Colonic mucosa (tissue), 4 donors: ENCODE measurements at regions of chr3 and their contacts with region 1.

Region 1: GRCh38 chr3:39202094-39202493 is 9.7 kb upstream of the XIRP1 start:
- DNase-seq: peak; percentile 10
- H3K4me3 ChIP-seq: no peak overlapping the region
- H3K27ac ChIP-seq: no peak overlapping the region
- H3K4me1 ChIP-seq: no peaks in the 10 kb centered on the region
- H3K27me3 ChIP-seq: no peaks in the 10 kb centered on the region
- CTCF ChIP-seq: no peak

Region 2: DNA sequence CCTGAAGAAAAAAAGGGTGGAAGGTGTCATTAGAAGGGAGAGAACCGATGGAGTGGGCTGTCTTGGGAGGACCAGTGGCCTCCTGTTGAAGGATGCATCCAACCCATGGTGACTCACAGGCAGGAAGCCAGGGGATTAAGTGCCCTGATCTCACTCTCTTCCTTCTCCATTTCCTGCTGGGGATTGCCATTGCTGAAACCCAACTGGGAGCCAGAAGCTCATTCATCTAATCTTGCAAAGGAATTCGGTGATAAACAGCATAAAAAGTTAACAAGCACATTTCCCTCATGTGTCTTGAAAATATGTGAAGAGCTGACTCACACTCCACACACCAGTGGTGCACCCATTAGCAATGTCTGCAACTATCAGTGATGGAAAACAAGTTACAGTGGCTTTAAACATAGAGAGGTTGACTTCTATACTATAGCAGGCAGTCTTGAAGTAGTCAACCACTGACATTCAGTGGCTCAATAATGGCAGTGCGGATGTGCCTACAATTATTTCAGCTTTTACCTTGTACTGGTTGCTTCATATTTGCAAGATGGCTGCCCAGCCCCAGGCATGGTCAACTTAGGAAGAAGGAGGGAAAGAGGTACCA is 35.9 kb before region 1 on chr3:
- intact Hi-C with region 1: no loop called
- DNase-seq: no peak
- H3K4me3 ChIP-seq: no peak overlapping the region
- H3K27ac ChIP-seq: peak overlapping the region; percentile 38
- H3K4me1 ChIP-seq: peaks cover 5% of the 10 kb centered on the region
- H3K27me3 ChIP-seq: no peaks in the 10 kb centered on the region
- CTCF ChIP-seq: no peak

Region 3: DNA sequence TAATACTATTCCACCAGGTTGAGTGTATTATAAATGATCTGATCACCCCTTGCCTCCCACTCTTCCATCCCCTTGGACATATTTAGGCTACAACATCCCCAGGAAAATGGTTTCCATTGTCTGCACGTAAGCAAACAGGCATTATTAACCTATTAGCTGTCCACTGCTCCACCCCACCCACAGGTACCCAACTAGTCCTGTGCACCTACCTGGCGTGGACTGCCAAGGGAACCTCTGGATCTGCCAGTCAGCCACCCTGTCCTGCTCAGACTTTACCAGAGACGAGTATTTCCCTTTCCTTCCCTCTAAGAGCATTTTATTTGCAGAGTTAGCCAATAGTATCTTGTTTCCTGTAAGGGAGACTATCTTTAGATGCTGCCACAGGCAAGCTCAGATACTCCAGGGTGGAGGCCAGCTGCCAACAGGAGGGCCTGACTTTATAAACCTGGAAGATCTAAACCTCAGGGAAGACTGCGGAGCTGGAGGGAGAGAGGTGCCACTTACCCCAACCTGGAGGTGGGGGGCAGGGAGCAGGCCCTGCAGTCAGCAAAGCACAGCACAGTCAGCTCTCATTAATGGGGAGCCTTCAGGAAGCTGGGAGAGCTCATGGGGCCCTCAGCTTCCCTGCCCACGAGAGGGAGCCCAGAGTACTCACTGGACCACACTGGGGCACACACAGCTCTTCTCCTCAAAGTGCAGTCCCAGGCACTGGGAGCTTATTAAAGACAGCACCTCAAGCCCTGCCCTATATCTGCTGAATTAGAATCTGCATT is 77.8 kb after region 1 on chr3 and contains the start of gene CX3CR1:
- intact Hi-C with region 1: loop called (anchors 5 kb)
- DNase-seq: no peak
- H3K4me3 ChIP-seq: no peak within 1 kb of the TSS
- H3K27ac ChIP-seq: no peak within 1 kb of the TSS
- H3K4me1 ChIP-seq: no peaks in the 10 kb centered on the region
- H3K27me3 ChIP-seq: no peaks in the 10 kb centered on the region
- CTCF ChIP-seq: no peak
- total RNA-seq, gene CX3CR1: 0.57 to 0.66 TPM

Region 4: GRCh38 chr3:39388741-39389248 is 186.7 kb after region 1 on chr3:
- intact Hi-C with region 1: no loop called
- DNase-seq: no peak
- H3K4me3 ChIP-seq: no peak overlapping the region
- H3K27ac ChIP-seq: no peak overlapping the region
- H3K4me1 ChIP-seq: peaks cover 16% of the 10 kb centered on the region
- H3K27me3 ChIP-seq: no peaks in the 10 kb centered on the region
- CTCF ChIP-seq: no peak

Region 5: DNA sequence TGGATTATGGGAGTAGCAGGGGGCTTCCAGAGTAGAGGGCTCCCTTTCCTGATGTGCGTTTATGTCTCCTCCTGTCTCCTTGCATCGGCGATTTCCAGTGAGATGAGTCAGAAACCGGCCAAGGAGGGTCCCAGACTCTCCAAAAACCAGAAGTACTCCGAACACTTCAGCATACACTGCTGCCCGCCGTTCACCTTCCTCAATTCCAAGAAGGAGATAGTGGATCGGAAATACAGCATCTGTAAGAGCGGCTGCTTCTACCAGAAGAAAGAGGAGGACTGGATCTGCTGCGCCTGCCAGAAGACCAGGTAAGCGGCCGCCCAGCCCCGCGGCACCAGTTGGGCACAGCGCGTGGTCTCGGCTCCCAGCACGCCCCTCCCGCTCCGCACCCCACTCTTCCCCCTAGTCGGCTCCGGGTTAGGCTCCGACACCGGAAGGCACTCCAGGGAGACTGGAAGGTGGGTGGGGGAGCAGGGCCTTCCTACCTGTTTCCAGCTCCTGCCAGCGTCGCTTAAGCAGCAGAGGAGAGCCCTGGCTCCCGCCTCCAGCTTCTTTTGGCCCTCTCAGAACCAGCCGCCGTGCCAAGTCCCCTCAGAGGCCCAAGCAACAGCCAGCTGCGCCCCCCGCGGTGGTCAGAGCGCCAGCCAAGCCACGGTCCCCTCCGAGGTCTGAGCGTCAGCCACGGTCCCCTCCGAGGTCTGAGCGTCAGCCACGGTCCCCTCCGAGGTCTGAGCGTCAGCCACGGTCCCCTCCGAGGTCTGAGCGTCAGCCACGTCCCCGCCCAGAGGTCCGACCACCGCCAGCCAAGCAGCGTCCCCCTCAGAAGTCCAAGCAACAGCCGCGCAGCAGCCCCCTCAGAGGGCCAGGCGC is 300.1 kb after region 1 on chr3:
- intact Hi-C with region 1: no loop called
- DNase-seq: peak; percentile 44
- H3K4me3 ChIP-seq: peak overlapping the region; percentile 21
- H3K27ac ChIP-seq: no peak overlapping the region
- H3K4me1 ChIP-seq: no peaks in the 10 kb centered on the region
- H3K27me3 ChIP-seq: no peaks in the 10 kb centered on the region
- CTCF ChIP-seq: no peak